Naive thymus-derived CD4-positive, alpha-beta T cell (primary cell): ENCODE measurements at regions of chrX and their contacts with region 1.

Region 1: DNA sequence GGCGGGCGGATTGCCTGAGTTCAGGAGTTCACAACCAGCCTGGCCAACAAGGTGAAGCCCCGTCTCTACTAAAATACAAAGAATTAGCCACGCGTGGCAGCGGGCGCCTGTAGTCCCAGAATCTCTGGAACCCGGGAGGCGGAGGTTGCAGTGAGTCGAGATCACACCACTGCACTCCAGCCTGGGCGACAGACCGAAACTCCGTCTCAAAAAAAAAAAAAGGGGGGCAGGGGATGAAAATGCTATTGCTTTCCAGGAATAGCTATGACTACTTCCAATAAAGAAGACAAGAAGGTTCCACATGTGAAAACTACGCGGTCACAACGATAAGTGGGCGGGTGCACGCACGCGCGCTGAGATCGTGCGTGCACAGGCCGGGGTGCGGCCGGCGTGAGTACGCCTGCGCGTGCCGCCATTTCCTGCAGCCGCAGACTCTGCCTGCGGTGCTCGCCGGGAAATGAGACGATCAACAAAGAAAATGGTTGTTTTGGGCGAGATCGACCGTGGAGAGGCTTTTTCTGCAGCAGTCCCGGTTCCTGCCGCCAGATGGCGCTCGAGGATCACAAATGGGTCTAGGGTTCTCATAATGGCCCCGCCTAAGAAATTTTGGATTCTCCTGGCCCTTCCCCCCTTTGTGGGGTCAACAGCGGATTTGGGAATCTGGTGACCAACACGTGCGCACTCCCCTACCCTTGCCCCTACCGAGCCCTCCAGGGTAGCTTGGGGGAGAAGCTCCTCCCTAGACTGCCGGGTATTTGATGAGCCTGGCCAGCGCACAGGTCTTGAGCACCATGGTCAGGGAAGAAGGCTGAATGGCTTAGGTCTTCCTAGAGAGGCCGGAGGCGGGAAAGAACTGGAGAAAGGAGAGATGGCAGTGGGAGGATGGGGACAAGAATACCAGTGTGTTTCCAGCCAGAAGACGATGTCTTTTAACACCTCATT is 35.1 kb downstream of the PNMA5 start:
- DNase-seq: peak; percentile 79 to 95 (median 89)
- ATAC-seq: peak; percentile 98
- H3K4me3 ChIP-seq: peak overlapping the region; percentile 52
- H3K4me3 Mint-ChIP-seq: peak overlapping the region; percentile 71 to 87 (median 77)
- H3K27ac ChIP-seq: peak overlapping the region; percentile 72
- H3K27ac Mint-ChIP-seq: peak overlapping the region; percentile 89 to 97 (median 93)
- H3K4me1 ChIP-seq: peaks cover 0 to 8% of the 10 kb centered on the region in 2 donors
- H3K4me1 Mint-ChIP-seq: peaks cover 0 to 12% (median 4%) of the 10 kb centered on the region in 7 donors
- H3K27me3 ChIP-seq: no peaks in the 10 kb centered on the region
- H3K27me3 Mint-ChIP-seq: peaks cover 0 to 4% (median 0%) of the 10 kb centered on the region in 5 donors

Region 2: DNA sequence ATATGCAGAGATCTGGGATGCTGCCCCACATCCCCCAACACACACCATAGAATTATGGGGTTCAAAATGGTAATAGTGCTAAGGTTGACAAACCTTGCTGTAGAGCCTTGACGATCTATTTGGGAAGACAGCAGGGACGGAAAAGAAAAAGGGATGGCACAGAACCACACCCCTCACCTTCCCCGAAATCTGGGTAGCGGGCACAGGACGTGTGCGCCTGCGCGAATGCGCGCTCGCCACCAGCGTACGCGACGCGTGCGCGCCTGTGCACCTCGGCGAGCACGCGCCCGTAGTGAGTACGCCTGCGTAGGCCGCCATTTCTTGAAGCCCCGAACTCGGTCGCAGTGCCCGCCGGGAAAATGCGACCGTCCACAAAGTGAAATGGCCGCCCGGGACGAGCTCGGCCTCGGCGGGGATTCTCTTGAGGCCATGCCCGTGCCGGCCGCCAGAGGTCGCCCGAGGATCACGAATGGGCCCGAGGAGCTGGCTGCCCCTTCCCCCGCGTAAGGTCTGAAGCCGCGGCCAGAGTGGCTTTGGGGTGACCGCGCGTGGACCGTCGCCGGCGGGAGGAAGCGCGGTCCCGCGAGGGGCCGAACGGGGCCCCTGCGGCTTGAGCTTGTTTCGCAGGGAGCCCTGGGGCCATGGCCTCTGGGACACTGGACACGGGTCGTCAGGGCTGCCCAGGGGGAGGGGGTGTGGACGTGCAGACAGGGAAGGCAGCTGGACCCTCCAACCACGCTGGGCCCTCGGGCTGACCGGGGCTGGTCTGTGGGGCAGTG is 17.3 kb before region 1 on chrX:
- CTCF ChIA-PET with region 1: interaction called, 5 read pairs
- POLR2A ChIA-PET with region 1: interaction called, 12 read pairs
- intact Hi-C with region 1: loop called (anchors 1 kb)
- DNase-seq: peak; percentile 76 to 92 (median 88)
- ATAC-seq: peak; percentile 98
- H3K4me3 ChIP-seq: peak overlapping the region; percentile 67
- H3K4me3 Mint-ChIP-seq: peak overlapping the region; percentile 75 to 89 (median 86)
- H3K27ac ChIP-seq: peak overlapping the region; percentile 77
- H3K27ac Mint-ChIP-seq: peak overlapping the region; percentile 84 to 93 (median 87)
- H3K4me1 ChIP-seq: peaks cover 8 to 11% of the 10 kb centered on the region in 2 donors
- H3K4me1 Mint-ChIP-seq: peaks cover 0 to 13% (median 5%) of the 10 kb centered on the region in 7 donors
- H3K27me3 ChIP-seq: no peaks in the 10 kb centered on the region
- H3K27me3 Mint-ChIP-seq: no peaks in the 10 kb centered on the region

Region 3: DNA sequence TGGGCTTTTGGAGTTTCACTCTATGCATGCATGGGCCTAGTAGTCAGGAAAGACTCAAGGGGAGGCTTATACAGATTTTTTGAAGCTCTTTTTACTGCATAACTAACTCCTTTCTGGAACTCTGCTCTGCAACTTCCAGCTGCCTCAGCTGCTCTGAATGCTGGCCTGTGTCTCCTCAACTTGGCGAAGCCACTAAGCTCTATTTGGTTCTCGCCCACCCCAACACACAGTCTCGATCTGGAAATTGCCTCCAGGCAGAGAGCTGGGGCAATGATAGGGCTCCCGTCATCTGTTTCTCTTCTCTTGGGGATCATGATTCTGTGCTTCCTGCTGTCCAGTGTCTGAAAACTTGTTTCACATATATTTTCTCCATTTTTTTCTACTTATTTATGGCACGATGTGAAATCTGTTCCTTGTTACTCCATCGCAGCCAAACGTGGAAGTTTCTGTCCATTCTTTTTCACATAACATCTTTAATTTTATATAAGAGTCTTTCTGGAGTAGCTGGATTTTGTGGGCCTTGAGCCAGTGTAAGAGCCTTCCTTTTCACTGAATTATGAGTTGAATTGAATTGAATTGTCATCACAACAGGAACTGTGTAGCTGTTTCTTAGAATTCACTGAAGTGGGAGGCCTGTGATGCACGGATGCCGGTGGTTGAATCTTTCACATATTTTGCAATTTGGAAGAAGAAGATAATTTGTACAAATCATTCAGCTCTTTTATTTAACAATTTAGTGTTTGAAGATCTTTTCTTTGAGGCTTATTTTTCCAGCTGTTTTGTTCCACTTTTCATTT is 384.2 kb after region 1 on chrX:
- CTCF ChIA-PET with region 1: no interaction called
- POLR2A ChIA-PET with region 1: no interaction called
- intact Hi-C with region 1: loop called in 1 of 2 experiments (anchors 5 kb)
- DNase-seq: peak in 4 of 9 donors; percentile 18 to 24 (median 23)
- ATAC-seq: peak; percentile 38
- H3K4me3 ChIP-seq: no peak overlapping the region
- H3K4me3 Mint-ChIP-seq: peak overlapping the region; percentile 5 to 90 (median 74)
- H3K27ac ChIP-seq: peak overlapping the region; percentile 48
- H3K27ac Mint-ChIP-seq: peak overlapping the region; percentile 72 to 97 (median 89)
- H3K4me1 ChIP-seq: peaks cover 0 to 23% of the 10 kb centered on the region in 2 donors
- H3K4me1 Mint-ChIP-seq: peaks cover 36 to 69% (median 62%) of the 10 kb centered on the region in 7 donors
- H3K27me3 ChIP-seq: no peaks in the 10 kb centered on the region
- H3K27me3 Mint-ChIP-seq: no peaks in the 10 kb centered on the region

Region 4: DNA sequence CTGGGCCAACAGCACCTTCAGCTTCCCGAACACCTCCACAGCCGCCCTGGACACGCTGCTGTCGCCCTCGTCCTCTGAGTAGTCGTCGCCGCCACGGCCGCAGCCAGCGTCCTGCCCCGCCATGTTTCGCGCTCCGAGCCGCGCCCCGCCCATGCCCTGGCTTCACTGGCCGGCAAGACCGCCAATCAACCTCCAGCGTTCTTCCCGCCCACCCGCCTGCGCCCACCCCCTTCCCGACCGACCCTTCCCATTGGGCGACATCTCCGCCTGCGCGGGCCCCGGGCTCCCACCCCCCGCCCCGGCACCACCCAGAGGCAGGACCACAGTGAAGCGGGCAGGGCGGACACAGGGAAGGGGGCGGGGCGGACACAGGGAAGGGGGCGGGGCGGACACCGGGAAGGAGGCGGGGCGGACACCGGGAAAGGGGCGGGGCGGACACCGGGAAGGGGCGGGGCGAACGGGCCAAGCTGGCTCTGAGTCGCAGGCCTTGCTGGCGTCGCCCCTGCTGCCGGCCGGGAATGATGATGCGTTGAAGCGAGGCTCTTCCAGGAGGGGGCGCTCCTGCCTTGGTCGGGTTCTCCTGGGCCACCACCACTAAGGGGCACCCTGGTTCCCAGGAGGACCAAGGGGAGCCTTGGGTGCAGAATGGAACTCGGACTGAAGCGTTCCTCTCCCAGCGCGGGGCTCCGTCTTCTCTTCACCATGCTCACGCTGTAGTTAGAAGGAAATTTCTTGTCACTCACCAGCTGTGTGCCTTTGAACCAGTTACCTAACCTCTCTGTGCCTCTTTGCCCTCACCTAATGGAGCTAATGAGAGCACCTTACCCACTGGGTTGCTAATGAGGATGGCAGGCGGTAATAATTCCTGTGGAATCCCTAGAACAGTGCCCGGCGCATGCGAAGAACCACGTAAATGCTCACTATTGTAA is 511.9 kb after region 1 on chrX and contains the start of gene HAUS7:
- CTCF ChIA-PET with region 1: no interaction called
- POLR2A ChIA-PET with region 1: no interaction called
- intact Hi-C with region 1: loop called (anchors 1 kb)
- DNase-seq: peak; percentile 73 to 88 (median 85)
- ATAC-seq: peak; percentile 92
- H3K4me3 ChIP-seq: peak within 1 kb of the TSS; percentile 74
- H3K4me3 Mint-ChIP-seq: peak within 1 kb of the TSS; percentile 64 to 88 (median 82)
- H3K27ac ChIP-seq: peak within 1 kb of the TSS; percentile 68
- H3K27ac Mint-ChIP-seq: peak within 1 kb of the TSS in 8 of 9 donors; percentile 62 to 85 (median 82)
- H3K4me1 ChIP-seq: peaks cover 3 to 17% of the 10 kb centered on the region in 2 donors
- H3K4me1 Mint-ChIP-seq: peaks cover 0 to 30% (median 12%) of the 10 kb centered on the region in 7 donors
- H3K27me3 ChIP-seq: no peaks in the 10 kb centered on the region
- H3K27me3 Mint-ChIP-seq: no peaks in the 10 kb centered on the region
- total RNA-seq, gene HAUS7: 23.2 to 44.8 (median 31.4) TPM

Region 5: GRCh38 chrX:153494541-153495361 is 536.0 kb after region 1 on chrX and contains the start of gene BGN:
- CTCF ChIA-PET with region 1: no interaction called
- POLR2A ChIA-PET with region 1: no interaction called
- intact Hi-C with region 1: no loop called
- DNase-seq: peak in 4 of 9 donors; percentile 4 to 18 (median 12)
- ATAC-seq: no peak
- H3K4me3 ChIP-seq: no peak within 1 kb of the TSS
- H3K4me3 Mint-ChIP-seq: peak within 1 kb of the TSS in 3 of 10 donors; percentile 35 to 68 (median 61)
- H3K27ac ChIP-seq: no peak within 1 kb of the TSS
- H3K27ac Mint-ChIP-seq: no peak within 1 kb of the TSS
- H3K4me1 ChIP-seq: no peaks in the 10 kb centered on the region
- H3K4me1 Mint-ChIP-seq: peaks cover 0 to 3% (median 0%) of the 10 kb centered on the region in 7 donors
- H3K27me3 ChIP-seq: no peaks in the 10 kb centered on the region
- H3K27me3 Mint-ChIP-seq: peaks cover 0 to 5% (median 0%) of the 10 kb centered on the region in 5 donors
- total RNA-seq, gene BGN: not detected

Region 6: GRCh38 chrX:153554519-153555167 is 595.8 kb after region 1 on chrX:
- CTCF ChIA-PET with region 1: interaction called, 4 read pairs
- POLR2A ChIA-PET with region 1: no interaction called
- intact Hi-C with region 1: loop called in 1 of 2 experiments (anchors 5 kb)
- DNase-seq: peak; percentile 26 to 71 (median 57)
- ATAC-seq: peak; percentile 78
- H3K4me3 ChIP-seq: no peak overlapping the region
- H3K4me3 Mint-ChIP-seq: no peak overlapping the region
- H3K27ac ChIP-seq: no peak overlapping the region
- H3K27ac Mint-ChIP-seq: no peak overlapping the region
- H3K4me1 ChIP-seq: no peaks in the 10 kb centered on the region
- H3K4me1 Mint-ChIP-seq: peaks cover 0 to 3% (median 0%) of the 10 kb centered on the region in 7 donors
- H3K27me3 ChIP-seq: no peaks in the 10 kb centered on the region
- H3K27me3 Mint-ChIP-seq: no peaks in the 10 kb centered on the region

Region 7: GRCh38 chrX:153662266-153662665 is 703.5 kb after region 1 on chrX:
- CTCF ChIA-PET with region 1: interaction called, 4 read pairs
- POLR2A ChIA-PET with region 1: no interaction called
- intact Hi-C with region 1: loop called in 1 of 2 experiments (anchors 1 kb)
- DNase-seq: peak in 8 of 9 donors; percentile 26 to 58 (median 52)
- ATAC-seq: no peak
- H3K4me3 ChIP-seq: no peak overlapping the region
- H3K4me3 Mint-ChIP-seq: peak overlapping the region in 9 of 10 donors; percentile 42 to 73 (median 55)
- H3K27ac ChIP-seq: no peak overlapping the region
- H3K27ac Mint-ChIP-seq: no peak overlapping the region
- H3K4me1 ChIP-seq: no peaks in the 10 kb centered on the region
- H3K4me1 Mint-ChIP-seq: peaks cover 0 to 6% (median 0%) of the 10 kb centered on the region in 7 donors
- H3K27me3 ChIP-seq: no peaks in the 10 kb centered on the region
- H3K27me3 Mint-ChIP-seq: peaks cover 0 to 46% (median 6%) of the 10 kb centered on the region in 5 donors